Ascending aorta (tissue), 2 donors: ENCODE measurements at regions of chr16 and their contacts with region 1.

Region 1: GRCh38 chr16:58755989-58756649 is 22.0 kb upstream of the GOT2 start:
- DNase-seq: peak in 1 of 2 donors; percentile 77
- H3K4me3 ChIP-seq: no peak overlapping the region
- H3K27ac ChIP-seq: no peak overlapping the region
- H3K4me1 ChIP-seq: no peaks in the 10 kb centered on the region
- H3K27me3 ChIP-seq: no peaks in the 10 kb centered on the region
- CTCF ChIP-seq: peak; percentile 18 to 74 (median 41)

Region 2: GRCh38 chr16:57846078-57846697 is 909.9 kb before region 1 on chr16:
- intact Hi-C with region 1: no loop called
- DNase-seq: no peak
- H3K4me3 ChIP-seq: no peak overlapping the region
- H3K27ac ChIP-seq: no peak overlapping the region
- H3K4me1 ChIP-seq: no peaks in the 10 kb centered on the region
- H3K27me3 ChIP-seq: no peaks in the 10 kb centered on the region
- CTCF ChIP-seq: no peak

Region 3: DNA sequence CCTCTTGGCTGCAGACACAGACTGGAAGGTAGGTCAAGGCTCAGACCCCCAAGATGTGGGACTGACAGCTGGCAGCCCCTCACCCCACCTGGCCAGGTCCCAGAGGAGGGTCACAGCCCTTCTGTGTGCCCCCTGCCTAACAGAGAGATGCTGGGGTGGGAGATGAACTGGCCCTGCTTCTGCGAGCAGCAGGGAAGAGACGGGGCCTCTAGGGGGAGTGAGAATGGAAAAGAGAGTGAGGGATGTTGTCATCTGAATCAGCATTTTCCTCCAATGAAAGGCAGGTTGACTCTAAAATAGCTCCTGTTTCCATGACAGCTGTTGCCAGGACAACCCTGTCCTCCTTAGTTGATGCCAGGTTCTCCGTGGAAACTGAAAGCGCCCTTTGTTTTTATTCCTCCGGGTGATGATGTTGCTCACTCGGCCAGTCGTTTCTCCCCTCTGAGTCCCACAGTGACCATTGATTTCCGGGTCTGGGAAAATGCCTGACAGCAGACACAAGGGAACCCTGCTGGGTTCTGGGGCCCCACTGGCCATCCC is 261.1 kb before region 1 on chr16:
- intact Hi-C with region 1: no loop called
- DNase-seq: peak; percentile 30 to 91
- H3K4me3 ChIP-seq: peak overlapping the region; percentile 11 to 44
- H3K27ac ChIP-seq: peak overlapping the region; percentile 63 to 66
- H3K4me1 ChIP-seq: peaks cover 0 to 4% of the 10 kb centered on the region in 2 donors
- H3K27me3 ChIP-seq: no peaks in the 10 kb centered on the region
- CTCF ChIP-seq: peak; percentile 21 to 56 (median 38)

Region 4: GRCh38 chr16:58678716-58679115 is 77.4 kb before region 1 on chr16:
- intact Hi-C with region 1: loop called (anchors 1 kb)
- DNase-seq: peak in 1 of 2 donors; percentile 68
- H3K4me3 ChIP-seq: no peak overlapping the region
- H3K27ac ChIP-seq: no peak overlapping the region
- H3K4me1 ChIP-seq: peaks cover 0 to 4% of the 10 kb centered on the region in 2 donors
- H3K27me3 ChIP-seq: no peaks in the 10 kb centered on the region
- CTCF ChIP-seq: peak in 2 of 3 experiments; percentile 32 to 67